GM12878 (cell line): ENCODE measurements at regions of chr6 and their contacts with region 1.

Region 1: DNA sequence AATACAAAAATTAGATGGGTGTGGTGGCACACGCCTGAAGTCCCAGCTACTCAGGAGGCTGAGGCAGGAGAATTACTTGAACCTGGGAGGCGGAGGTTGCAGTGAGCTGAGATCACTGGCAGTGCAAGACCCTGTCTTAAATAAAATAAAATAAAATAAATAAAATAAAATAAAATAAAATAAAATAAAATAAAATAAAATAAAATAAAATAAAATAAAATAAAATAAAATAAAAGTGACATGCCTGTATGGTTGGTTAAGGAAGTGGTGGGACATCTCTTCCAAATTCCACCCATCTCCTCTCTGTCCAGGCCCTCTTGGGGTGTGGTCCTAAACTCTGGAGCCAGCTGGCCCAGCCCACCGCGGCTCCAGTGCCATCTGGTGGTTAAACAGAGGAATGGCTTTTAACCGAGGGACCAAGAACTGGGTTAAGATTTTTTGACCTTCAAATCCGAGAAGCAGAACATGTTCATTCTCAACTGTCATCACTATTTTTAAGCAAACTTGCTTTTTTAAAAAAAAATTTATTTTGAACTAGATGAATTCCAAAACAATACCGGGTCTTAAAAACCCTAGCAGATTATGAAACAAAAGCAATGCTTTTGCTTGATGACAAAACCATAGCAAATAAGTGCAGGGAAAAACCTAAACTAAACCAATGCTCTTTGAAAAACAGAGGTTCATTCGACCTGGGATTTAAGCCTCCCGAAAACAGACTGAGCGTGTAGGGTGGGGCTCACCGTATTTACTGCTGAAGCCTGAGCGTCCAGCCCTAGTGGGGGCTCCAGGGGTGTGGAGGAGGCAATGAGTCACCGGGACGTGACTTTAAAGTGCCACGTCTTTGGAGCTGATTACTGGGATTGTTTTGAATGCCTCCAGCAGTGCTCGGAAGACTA is 68.8 kb downstream of the CDC5L start:
- DNase-seq: no peak
- ATAC-seq: peak; percentile 95
- H3K4me3 ChIP-seq: no peak overlapping the region
- H3K27ac ChIP-seq: no peak overlapping the region
- H3K4me1 ChIP-seq: no peaks in the 10 kb centered on the region
- H3K27me3 ChIP-seq: no peaks in the 10 kb centered on the region
- CTCF ChIP-seq: peak; percentile 75 to 79 (median 76)
- EP300 ChIP-seq: no peak
- POLR2A ChIP-seq: no peak
- RAD21 ChIP-seq: peak; percentile 72

Region 2: DNA sequence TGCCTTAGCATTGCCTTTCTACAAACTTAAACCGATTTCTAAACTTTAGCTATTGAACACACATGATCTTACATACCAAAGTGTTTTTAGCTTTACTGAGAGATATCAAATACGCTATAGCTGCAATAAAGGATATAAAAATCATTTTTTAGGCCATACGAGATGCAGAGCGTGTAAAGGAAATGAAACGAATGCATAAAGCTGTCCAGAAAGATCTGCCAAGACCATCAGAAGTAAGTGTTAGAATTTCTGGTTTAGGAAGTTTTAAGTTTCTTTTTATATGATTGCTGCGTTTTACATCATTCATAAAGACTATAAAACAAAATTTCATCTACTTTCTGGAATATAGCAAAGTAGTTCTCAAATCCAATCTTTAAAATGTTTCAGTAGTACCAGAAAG is 30.4 kb before region 1 on chr6:
- CTCF ChIA-PET with region 1: interaction called, 31 read pairs
- POLR2A ChIA-PET with region 1: no interaction called
- RAD21 ChIA-PET with region 1: interaction called, 5 read pairs
- SMC1A ChIA-PET with region 1: interaction called, 14 read pairs
- in situ Hi-C with region 1: no loop called
- intact Hi-C with region 1: loop called (anchors 1 kb)
- DNase-seq: no peak
- ATAC-seq: no peak
- H3K4me3 ChIP-seq: no peak overlapping the region
- H3K27ac ChIP-seq: no peak overlapping the region
- H3K4me1 ChIP-seq: no peaks in the 10 kb centered on the region
- H3K27me3 ChIP-seq: no peaks in the 10 kb centered on the region
- CTCF ChIP-seq: no peak
- EP300 ChIP-seq: no peak
- POLR2A ChIP-seq: no peak
- RAD21 ChIP-seq: no peak

Region 3: DNA sequence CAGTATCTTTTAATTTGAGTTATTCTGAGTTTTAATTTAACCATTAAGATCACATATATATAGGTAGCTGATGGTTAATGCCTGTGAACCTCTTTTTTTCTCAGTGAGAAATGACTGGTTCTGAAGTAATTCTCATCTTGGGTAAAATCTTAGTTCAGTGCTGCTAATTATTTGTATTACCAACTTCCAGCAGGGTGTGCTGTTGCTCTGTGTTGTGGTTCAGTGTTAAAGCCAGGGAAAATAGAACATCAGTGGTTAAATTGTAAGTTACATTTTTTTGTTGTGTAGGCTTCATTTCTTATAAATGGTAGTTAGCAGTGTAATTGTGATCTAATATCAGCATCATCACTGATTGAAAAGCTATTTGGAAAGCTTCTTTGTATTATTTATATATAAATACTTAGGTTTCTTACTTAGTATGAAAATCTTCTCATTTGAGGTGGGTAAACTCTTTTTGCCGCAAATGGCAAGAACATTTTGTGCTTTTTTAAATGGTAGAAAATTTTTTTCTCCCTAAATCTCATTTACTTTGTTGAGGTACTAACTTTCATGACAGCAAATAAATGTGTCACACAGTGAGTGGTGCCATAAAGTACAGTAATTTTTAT is 25.1 kb before region 1 on chr6:
- CTCF ChIA-PET with region 1: interaction called, 31 read pairs
- POLR2A ChIA-PET with region 1: no interaction called
- RAD21 ChIA-PET with region 1: interaction called, 5 read pairs
- SMC1A ChIA-PET with region 1: interaction called, 14 read pairs
- in situ Hi-C with region 1: no loop called
- intact Hi-C with region 1: loop called (anchors 1 kb)
- DNase-seq: peak; percentile 3
- ATAC-seq: peak; percentile 93
- H3K4me3 ChIP-seq: no peak overlapping the region
- H3K27ac ChIP-seq: no peak overlapping the region; the same call in 1 of the 2 replicates
- H3K4me1 ChIP-seq: no peaks in the 10 kb centered on the region
- H3K27me3 ChIP-seq: no peaks in the 10 kb centered on the region
- CTCF ChIP-seq: peak; percentile 61 to 79 (median 62); a peak in 5 of 6 replicates
- EP300 ChIP-seq: no peak
- POLR2A ChIP-seq: no peak
- RAD21 ChIP-seq: peak; percentile 68

Region 4: GRCh38 chr6:44439270-44440045 is 16.9 kb before region 1 on chr6:
- CTCF ChIA-PET with region 1: interaction called, 25 read pairs
- POLR2A ChIA-PET with region 1: no interaction called
- RAD21 ChIA-PET with region 1: no interaction called
- SMC1A ChIA-PET with region 1: interaction called, 4 read pairs
- in situ Hi-C with region 1: no loop called
- intact Hi-C with region 1: no loop called
- DNase-seq: no peak
- ATAC-seq: no peak
- H3K4me3 ChIP-seq: no peak overlapping the region
- H3K27ac ChIP-seq: no peak overlapping the region
- H3K4me1 ChIP-seq: no peaks in the 10 kb centered on the region
- H3K27me3 ChIP-seq: no peaks in the 10 kb centered on the region
- CTCF ChIP-seq: no peak
- EP300 ChIP-seq: no peak
- POLR2A ChIP-seq: no peak
- RAD21 ChIP-seq: no peak